Activated naive CD4-positive, alpha-beta T cell treated with anti-CD3 and anti-CD28 coated beads for 36 hours (primary cell): ENCODE measurements at regions of chr3 and their contacts with region 1.

Region 1: DNA sequence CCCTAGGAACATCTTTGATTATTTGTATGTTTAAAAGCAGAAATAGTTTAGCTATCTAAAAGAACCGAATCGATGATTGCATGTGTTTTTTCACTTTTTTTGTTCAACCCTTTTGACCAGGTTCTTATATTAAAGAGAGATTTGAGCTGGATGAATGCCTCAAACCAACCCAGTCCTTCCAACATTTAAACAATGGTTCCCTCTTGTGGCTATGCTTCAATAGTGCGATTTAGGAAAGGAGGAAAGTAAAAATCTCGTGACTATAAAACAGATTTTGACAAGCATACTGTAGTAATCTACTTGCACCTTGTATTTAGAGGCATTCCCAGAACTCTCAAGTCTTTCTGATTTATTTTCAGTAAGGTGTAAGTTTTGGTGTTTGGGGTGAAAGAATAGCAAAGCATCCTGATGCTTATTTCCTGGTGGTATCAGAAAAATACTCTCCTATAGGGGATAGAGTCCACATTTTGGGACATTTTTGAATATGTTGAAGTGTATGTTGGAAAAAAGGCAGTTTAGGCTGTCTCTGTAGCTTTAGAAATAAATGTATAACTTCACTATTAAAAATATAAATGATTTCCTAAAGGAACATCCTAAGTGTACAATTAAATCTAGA is 159.6 kb upstream of the KCNH8 start:
- DNase-seq: no peak
- H3K4me3 Mint-ChIP-seq: peak overlapping the region; percentile 74
- H3K27ac Mint-ChIP-seq: peak overlapping the region; percentile 71
- H3K4me1 Mint-ChIP-seq: peaks cover 20% of the 10 kb centered on the region
- H3K27me3 Mint-ChIP-seq: peaks cover 15% of the 10 kb centered on the region

Region 2: GRCh38 chr3:17258823-17259436 is 1729.8 kb before region 1 on chr3:
- CTCF ChIA-PET with region 1: no interaction called
- intact Hi-C with region 1: loop called (anchors 2 kb)
- DNase-seq: peak; percentile 19
- H3K4me3 Mint-ChIP-seq: no peak overlapping the region
- H3K27ac Mint-ChIP-seq: no peak overlapping the region
- H3K4me1 Mint-ChIP-seq: no peaks in the 10 kb centered on the region
- H3K27me3 Mint-ChIP-seq: no peaks in the 10 kb centered on the region

Region 3: DNA sequence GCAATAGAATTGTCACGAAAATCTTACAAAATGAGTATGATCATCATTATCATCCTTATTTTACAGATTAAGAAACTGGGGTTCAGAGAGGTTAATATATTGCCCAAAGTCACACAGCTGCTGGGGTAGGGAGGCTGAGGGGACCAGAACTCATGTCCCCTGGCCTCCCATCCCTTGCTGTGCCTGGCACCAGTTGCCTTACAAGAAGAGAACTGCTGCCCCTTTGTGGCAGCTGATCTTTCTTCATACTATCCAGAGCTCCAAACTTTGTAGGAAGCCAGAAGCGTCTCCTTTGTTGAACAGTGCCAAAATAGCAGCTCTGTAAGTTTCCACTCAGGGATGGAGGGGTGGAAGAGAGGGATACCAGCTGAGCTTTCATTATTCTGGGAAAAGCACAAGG is 1009.5 kb before region 1 on chr3:
- CTCF ChIA-PET with region 1: no interaction called
- intact Hi-C with region 1: loop called (anchors 10 kb)
- DNase-seq: peak; percentile 28
- H3K4me3 Mint-ChIP-seq: no peak overlapping the region
- H3K27ac Mint-ChIP-seq: no peak overlapping the region
- H3K4me1 Mint-ChIP-seq: no peaks in the 10 kb centered on the region
- H3K27me3 Mint-ChIP-seq: peaks cover 5% of the 10 kb centered on the region

Region 4: DNA sequence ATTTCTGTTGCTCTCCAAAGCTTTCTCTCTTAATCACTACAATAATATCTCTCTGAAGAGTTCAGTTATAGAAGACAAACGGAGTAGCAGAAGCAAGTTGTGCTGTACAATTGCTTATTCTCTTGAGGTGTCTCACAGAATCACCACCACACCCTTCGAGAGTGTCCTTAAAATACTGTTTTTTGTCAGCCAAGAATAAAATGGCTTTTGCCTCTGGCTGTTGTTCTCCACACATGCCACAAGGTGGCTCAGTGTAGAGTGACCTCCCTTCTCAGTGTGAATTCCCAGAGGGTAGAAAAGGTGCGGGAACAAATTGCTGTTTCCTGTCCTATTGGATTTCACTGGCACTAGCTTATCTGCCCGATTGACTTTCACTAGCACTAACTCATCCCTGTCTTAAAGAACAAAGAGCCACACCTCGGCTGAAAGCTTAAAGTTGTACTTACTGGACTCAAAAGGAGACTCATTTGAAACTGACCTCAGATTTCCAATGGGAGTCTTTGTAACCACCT is 429.3 kb before region 1 on chr3:
- CTCF ChIA-PET with region 1: interaction called, 4 read pairs
- intact Hi-C with region 1: loop called (anchors 1 kb)
- DNase-seq: peak; percentile 47
- H3K4me3 Mint-ChIP-seq: peak overlapping the region; percentile 39
- H3K27ac Mint-ChIP-seq: peak overlapping the region; percentile 88
- H3K4me1 Mint-ChIP-seq: peaks cover 66% of the 10 kb centered on the region
- H3K27me3 Mint-ChIP-seq: no peaks in the 10 kb centered on the region

Region 5: DNA sequence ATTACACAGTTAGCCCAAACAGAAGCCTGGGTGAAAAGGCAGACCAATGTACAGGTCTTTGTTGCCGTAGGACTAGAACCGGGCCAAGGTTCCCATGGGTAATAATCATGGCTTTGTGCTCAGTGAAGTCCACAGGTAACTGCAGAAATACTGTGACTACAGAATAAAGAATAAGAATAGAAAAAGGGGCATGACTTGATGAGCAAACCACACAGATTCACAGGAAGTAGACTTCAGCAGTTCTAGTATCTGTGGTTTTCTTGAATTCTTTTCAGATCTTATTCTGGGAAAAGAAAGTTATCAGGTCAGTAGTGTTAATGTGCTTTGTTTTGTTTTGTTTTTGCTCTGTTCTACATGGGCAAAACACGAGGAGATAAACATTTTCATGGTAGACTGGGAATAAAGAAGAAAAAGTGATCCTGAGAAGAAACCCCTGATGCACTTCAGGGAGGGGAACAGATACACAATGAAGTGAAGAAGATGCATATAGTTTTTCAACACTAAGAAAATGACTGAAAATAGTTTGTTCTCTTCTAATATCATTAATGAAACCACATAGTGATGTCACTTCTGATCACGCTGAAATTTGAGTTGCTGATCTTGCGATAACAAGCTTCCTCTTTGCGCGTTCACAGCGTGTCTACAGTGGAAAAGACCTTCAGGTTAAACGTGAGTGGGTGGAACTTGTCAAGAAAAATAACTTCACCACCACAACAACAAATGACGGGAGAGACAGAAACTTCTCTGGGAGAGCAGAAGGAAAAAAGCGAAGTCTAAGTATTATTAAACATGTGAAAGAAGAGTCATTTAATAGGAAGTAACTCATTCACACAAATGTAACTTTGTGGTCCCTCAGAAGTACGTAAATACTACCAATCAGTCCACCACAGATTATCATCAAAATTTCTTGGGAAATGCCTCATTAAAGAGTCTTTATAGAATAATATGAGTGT is 247.8 kb before region 1 on chr3:
- CTCF ChIA-PET with region 1: interaction called, 5 read pairs
- intact Hi-C with region 1: loop called (anchors 1 kb)
- DNase-seq: peak; percentile 77
- H3K4me3 Mint-ChIP-seq: peak overlapping the region; percentile 63
- H3K27ac Mint-ChIP-seq: peak overlapping the region; percentile 97
- H3K4me1 Mint-ChIP-seq: peaks cover 88% of the 10 kb centered on the region
- H3K27me3 Mint-ChIP-seq: no peaks in the 10 kb centered on the region

Region 6: DNA sequence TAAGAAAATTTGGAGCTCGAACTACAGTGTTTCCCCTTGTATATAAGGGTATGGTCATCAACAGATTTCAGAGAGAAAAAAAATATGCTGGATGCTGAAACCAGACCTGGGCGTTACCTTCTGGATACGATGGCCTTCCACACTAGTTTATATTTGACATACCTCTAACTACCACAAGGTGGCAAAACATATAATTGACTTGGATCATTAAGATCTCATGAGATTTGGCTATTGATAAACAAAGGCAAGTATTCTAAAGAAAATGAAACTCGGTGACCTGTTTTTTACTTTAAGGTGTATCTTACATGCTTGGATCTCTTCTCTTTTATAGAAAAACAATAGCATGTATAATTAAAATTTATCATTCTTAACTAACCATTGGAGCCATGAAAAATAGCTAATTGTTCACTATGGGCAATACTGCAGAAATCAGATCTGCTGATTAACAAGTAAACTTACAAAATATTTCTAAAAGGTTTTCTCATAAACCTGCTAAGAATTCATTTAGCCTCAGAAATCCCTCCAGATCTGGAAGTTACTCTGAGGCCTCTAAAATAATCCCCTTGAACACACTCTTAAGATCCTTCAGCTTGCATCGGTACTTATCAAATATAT is 141.0 kb before region 1 on chr3:
- CTCF ChIA-PET with region 1: interaction called, 29 read pairs
- intact Hi-C with region 1: loop called (anchors 1 kb)
- DNase-seq: no peak
- H3K4me3 Mint-ChIP-seq: no peak overlapping the region
- H3K27ac Mint-ChIP-seq: no peak overlapping the region
- H3K4me1 Mint-ChIP-seq: peaks cover 23% of the 10 kb centered on the region
- H3K27me3 Mint-ChIP-seq: no peaks in the 10 kb centered on the region

Region 7: GRCh38 chr3:19146685-19147650 is 158.2 kb after region 1 on chr3:
- CTCF ChIA-PET with region 1: no interaction called
- intact Hi-C with region 1: loop called (anchors 2 kb)
- DNase-seq: peak; percentile 78
- H3K4me3 Mint-ChIP-seq: peak overlapping the region; percentile 81
- H3K27ac Mint-ChIP-seq: peak overlapping the region; percentile 54
- H3K4me1 Mint-ChIP-seq: peaks cover 15% of the 10 kb centered on the region
- H3K27me3 Mint-ChIP-seq: peaks cover 34% of the 10 kb centered on the region